Esophagus muscularis mucosa (tissue), 4 donors: ENCODE measurements at regions of chr5 and their contacts with region 1.

Region 1: GRCh38 chr5:102754767-102755431 is at the start of gene PAM:
- DNase-seq: no peak
- H3K4me3 ChIP-seq: peak within 1 kb of the TSS; percentile 73 to 93 (median 88)
- H3K27ac ChIP-seq: peak within 1 kb of the TSS; percentile 79 to 83 (median 82)
- H3K4me1 ChIP-seq: peaks cover 29 to 41% (median 36%) of the 10 kb centered on the region in 4 donors
- H3K27me3 ChIP-seq: no peaks in the 10 kb centered on the region
- CTCF ChIP-seq: no peak
- EP300 ChIP-seq: no peak
- POLR2A ChIP-seq: peak; percentile 42
- total RNA-seq, gene PAM: 212 to 250 (median 227) TPM

Region 2: DNA sequence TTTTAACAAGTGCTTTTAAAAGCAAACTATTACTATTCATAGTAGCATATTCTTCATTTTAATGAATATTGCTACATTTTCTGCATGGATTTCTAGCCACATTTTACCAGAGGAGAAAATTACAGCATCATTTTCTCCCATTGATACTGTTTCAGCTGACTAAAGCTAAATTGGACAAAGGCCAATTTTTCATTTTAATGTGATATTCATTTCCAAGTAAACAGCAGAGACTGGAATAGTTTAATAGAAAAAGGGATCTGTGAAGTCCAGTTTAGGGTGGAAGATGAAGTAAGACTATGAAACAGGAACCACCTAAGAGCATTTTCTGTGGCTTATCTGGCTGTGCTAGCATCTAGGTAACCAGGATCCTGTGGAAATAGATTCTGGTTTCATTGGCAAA is 236.9 kb after region 1 on chr5:
- intact Hi-C with region 1: no loop called
- DNase-seq: no peak
- H3K4me3 ChIP-seq: no peak overlapping the region
- H3K27ac ChIP-seq: no peak overlapping the region
- H3K4me1 ChIP-seq: peaks cover 0 to 5% (median 0%) of the 10 kb centered on the region in 4 donors
- H3K27me3 ChIP-seq: no peaks in the 10 kb centered on the region
- CTCF ChIP-seq: no peak
- EP300 ChIP-seq: no peak
- POLR2A ChIP-seq: no peak

Region 3: DNA sequence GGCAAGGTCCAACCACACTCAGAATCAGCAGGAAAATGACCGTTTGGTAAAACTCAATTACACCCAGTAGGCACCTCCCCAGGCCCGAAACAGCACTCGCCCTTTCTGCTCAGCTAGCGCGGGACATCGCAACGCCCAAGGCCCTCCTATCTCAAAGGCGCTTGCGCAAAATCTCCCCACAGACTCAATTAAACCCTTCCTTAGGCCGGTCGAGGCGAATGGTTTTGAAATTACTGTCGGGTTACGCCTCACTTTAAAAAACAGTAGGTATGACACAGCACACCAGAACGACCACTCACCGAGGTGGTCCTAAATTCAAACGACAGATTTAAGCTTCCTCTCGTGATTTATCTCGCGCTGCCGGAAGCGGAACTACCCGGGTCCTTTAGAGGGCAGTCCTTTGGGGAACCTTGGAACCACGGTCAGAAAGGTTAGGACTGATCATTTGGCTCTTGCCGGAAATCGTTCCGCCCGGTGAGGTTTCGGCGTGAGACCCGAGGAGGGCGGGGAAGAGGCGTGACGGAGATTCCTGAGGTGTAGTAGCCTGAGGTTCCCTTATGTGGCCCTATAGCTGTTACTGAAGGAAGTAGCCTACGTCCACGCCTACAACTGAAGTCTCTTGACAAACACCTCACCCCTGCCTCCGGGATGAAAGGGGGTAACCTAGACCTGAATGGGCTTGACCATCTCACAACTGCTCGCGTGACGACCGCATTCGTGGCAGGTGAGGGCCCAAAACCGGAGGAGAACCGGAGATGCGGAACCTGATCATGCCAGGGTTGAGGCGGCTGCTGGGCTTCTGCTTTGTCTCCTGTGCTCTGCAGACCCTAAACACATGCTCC is 365.1 kb after region 1 on chr5 and contains the starts of genes GIN1 and PPIP5K2:
- intact Hi-C with region 1: loop called (anchors 10 kb)
- DNase-seq: peak; percentile 98
- H3K4me3 ChIP-seq: peak within 1 kb of the TSS; percentile 60 to 92 (median 82)
- H3K27ac ChIP-seq: peak within 1 kb of the TSS; percentile 90 to 91 (median 90)
- H3K4me1 ChIP-seq: peaks cover 4 to 38% (median 37%) of the 10 kb centered on the region in 4 donors
- H3K27me3 ChIP-seq: no peaks in the 10 kb centered on the region
- CTCF ChIP-seq: peak in 1 of 3 experiments; percentile 22
- EP300 ChIP-seq: no peak
- POLR2A ChIP-seq: no peak
- total RNA-seq, gene GIN1: 4.4 to 10.4 (median 7.2) TPM
- total RNA-seq, gene PPIP5K2: 15.6 to 21.6 (median 17.3) TPM

Region 4: DNA sequence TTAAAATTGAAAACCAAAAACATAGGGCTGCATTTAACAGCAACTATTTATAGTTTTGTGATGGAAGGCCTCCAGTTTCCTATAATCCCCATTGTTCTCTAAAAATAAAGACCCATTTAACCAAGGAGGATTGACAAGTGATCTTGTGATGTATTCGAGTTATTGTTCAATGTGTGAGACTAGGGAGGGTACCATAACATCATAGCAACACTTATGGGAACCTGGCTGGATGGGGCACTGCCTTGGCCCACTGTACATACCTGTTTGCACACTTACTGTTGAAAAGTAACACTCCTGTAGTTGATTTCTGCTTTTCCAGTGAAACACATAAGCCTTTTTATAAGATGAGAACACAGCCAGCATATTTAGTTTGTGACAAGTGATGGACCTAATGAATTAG is 535.9 kb after region 1 on chr5:
- intact Hi-C with region 1: no loop called
- DNase-seq: no peak
- H3K4me3 ChIP-seq: no peak overlapping the region
- H3K27ac ChIP-seq: no peak overlapping the region
- H3K4me1 ChIP-seq: peaks cover 0 to 5% (median 0%) of the 10 kb centered on the region in 4 donors
- H3K27me3 ChIP-seq: no peaks in the 10 kb centered on the region
- CTCF ChIP-seq: no peak
- EP300 ChIP-seq: no peak
- POLR2A ChIP-seq: no peak